Right cardiac atrium (tissue), 5 donors: ENCODE measurements at regions of chr5 and their contacts with region 1.

Region 1: DNA sequence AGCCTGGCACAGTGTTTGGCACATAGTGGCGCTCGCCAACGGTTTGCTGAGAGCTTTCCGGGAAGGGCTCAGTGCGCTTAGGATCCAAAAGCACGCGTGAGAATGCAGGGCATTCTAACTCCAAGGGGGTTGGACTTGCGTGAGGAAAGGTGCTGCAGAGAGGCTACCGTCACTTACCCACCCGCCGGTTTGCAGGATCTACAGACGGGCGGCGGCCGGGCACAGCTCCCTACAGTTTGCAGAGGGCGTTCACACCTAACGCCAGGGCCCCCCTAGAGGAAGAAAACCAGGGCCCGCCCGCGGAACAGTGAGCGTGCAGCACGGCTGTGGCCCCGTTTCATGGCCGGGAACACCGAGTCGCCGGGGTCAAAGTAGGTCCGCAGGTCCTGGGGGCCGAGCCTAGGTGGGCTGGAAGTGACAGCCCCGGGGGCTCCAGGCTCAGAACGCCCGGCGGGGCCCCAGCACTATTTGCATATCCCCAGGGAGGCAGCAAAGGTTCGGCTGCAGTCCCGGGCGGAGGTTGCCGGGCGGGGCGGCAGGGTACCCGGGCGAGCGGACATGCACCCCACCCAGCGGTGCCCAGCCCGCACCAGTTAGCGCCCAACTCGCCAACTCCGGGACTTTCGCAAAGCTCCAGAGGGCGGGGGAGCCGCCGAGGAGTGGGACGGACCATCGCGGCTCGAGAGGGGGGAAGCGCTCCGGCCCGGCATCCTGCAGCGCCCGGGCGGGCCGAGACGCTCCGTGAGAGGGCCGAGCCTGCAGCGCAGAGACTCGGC is 526 bp upstream of the GALNT10 start:
- DNase-seq: peak; percentile 90 to 95 (median 94)
- ATAC-seq: peak; percentile 94 to 95
- H3K4me3 ChIP-seq: peak overlapping the region; percentile 87
- H3K27ac ChIP-seq: peak overlapping the region; percentile 38
- H3K4me1 ChIP-seq: peaks cover 9% of the 10 kb centered on the region
- H3K27me3 ChIP-seq: no peaks in the 10 kb centered on the region

Region 2: DNA sequence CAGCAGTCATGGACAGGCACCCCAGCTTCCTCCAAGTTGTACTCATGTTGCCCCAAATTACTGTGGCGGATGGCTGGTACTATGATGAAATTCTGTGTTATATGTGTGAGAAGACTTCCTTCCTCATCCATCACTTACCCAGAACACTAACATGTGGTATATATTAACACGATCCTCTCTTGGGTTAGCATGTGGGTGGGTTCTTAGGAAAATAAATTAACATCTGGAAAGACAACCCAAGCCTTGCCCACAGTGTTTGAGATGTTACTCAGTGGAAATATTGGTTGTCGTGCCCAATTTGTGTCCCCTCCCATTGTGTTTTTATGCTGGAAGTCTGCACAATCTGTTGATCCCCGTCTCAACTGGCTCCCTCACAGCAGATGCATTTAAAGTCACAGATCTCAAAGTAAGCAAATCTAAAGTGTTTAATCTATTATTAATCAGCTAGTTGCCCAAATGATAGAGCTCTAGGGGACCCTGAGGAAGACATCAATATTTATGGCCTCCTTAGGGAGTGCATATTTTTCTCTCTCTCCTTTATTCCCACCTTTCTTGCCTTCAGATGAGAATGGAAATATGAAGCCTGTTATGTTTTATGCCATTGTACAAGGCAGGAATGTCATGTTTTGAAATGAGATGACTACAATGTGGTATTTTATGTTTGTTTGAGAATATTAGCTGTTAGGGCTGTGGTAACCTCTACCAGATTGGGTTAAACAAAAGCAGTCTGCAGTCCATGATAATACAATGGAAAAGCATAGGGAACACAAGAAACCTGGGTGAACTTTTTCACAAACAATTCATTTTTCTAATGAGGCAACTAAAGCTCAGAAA is 605.7 kb before region 1 on chr5:
- intact Hi-C with region 1: no loop called
- DNase-seq: no peak
- ATAC-seq: no peak
- H3K4me3 ChIP-seq: no peak overlapping the region
- H3K27ac ChIP-seq: no peak overlapping the region
- H3K4me1 ChIP-seq: no peaks in the 10 kb centered on the region
- H3K27me3 ChIP-seq: no peaks in the 10 kb centered on the region

Region 3: DNA sequence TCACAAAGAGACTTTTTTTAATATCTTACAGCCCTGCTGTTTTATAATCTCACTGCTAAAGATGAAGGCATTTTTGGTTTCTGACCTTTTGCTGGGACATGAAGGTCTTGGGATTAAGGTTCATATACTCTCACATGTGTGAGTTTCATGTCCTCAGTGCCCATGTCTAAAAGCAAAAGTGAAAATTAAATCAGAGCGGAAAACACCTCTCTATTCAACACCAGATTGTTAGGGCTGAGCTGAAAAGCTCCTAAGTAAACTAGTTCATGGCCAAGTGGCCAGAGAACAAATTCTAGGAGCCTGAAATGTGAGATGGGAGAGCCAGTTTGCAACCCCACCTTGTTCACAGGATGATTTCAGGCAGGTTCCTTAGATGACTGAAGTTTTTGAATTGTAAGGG is 588.6 kb before region 1 on chr5:
- intact Hi-C with region 1: no loop called
- DNase-seq: no peak
- ATAC-seq: no peak
- H3K4me3 ChIP-seq: no peak overlapping the region
- H3K27ac ChIP-seq: no peak overlapping the region
- H3K4me1 ChIP-seq: no peaks in the 10 kb centered on the region
- H3K27me3 ChIP-seq: no peaks in the 10 kb centered on the region

Region 4: GRCh38 chr5:153959134-153959957 is 230.7 kb before region 1 on chr5:
- intact Hi-C with region 1: no loop called
- DNase-seq: no peak
- ATAC-seq: peak in 1 of 2 donors; percentile 11
- H3K4me3 ChIP-seq: no peak overlapping the region
- H3K27ac ChIP-seq: no peak overlapping the region
- H3K4me1 ChIP-seq: no peaks in the 10 kb centered on the region
- H3K27me3 ChIP-seq: no peaks in the 10 kb centered on the region

Region 5: GRCh38 chr5:153974131-153974812 is 215.7 kb before region 1 on chr5:
- intact Hi-C with region 1: loop called in 2 of 4 experiments (anchors 5 to 10 kb)
- DNase-seq: peak in 1 of 3 donors; percentile 47
- ATAC-seq: peak; percentile 10 to 49
- H3K4me3 ChIP-seq: no peak overlapping the region
- H3K27ac ChIP-seq: no peak overlapping the region
- H3K4me1 ChIP-seq: no peaks in the 10 kb centered on the region
- H3K27me3 ChIP-seq: no peaks in the 10 kb centered on the region